ENCODE measurements at regions of chr5 and their contacts with region 1.

Region 1: DNA sequence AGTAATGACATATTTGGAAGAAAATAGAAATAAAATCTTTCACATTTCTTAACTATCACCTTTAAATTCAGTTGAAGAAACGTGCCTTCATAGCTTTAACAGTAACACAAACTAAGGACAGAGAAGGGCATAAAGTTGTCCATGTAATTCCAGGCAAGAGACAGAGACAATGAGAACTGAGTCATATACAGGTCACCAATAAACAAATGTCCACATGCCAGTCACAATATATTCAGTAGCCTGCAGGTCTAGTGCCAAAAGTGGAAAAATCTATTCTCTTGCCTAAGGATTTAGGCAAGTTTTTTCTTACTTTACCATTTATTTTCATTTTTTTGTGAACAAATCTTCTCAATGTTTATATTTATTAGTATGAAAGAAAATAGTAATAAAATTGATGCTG is 1711.5 kb upstream of the NUDT12 start:
- DNase-seq: no peak
- H3K4me3 ChIP-seq: no peak overlapping the region
- H3K27ac ChIP-seq: no peak overlapping the region
- H3K4me1 ChIP-seq: no peaks in the 10 kb centered on the region
- H3K27me3 ChIP-seq: no peaks in the 10 kb centered on the region
- CTCF ChIP-seq: no peak
- POLR2A ChIP-seq: no peak

Region 2: GRCh38 chr5:105259581-105260217 is 14.4 kb before region 1 on chr5:
- intact Hi-C with region 1: loop called (anchors 2 kb)
- DNase-seq: no peak
- H3K4me3 ChIP-seq: no peak overlapping the region
- H3K27ac ChIP-seq: no peak overlapping the region
- H3K4me1 ChIP-seq: no peaks in the 10 kb centered on the region
- H3K27me3 ChIP-seq: no peaks in the 10 kb centered on the region
- CTCF ChIP-seq: no peak
- POLR2A ChIP-seq: no peak